CD4-positive, alpha-beta T cell (primary cell): ENCODE measurements at regions of chr4 and their contacts with region 1.

Region 1: GRCh38 chr4:36325499-36325898 is 44.1 kb downstream of the DTHD1 start:
- DNase-seq: peak in 4 of 14 experiments; percentile 17 to 78 (median 70)
- ATAC-seq: peak; percentile 29
- H3K4me3 ChIP-seq: no peak overlapping the region
- H3K4me3 Mint-ChIP-seq: peak overlapping the region; percentile 1
- H3K27ac ChIP-seq: peak overlapping the region in 1 of 2 donors; percentile 4
- H3K27ac Mint-ChIP-seq: peak overlapping the region; percentile 28
- H3K4me1 ChIP-seq: peaks cover 24% of the 10 kb centered on the region
- H3K4me1 Mint-ChIP-seq: peaks cover 47% of the 10 kb centered on the region
- H3K27me3 ChIP-seq: no peaks in the 10 kb centered on the region
- H3K27me3 Mint-ChIP-seq: no peaks in the 10 kb centered on the region
- CTCF ChIP-seq: no peak

Region 2: GRCh38 chr4:35591035-35591434 is 734.5 kb before region 1 on chr4:
- CTCF ChIA-PET with region 1: no interaction called
- POLR2A ChIA-PET with region 1: no interaction called
- intact Hi-C with region 1: no loop called
- DNase-seq: no peak
- ATAC-seq: no peak
- H3K4me3 ChIP-seq: no peak overlapping the region
- H3K4me3 Mint-ChIP-seq: no peak overlapping the region
- H3K27ac ChIP-seq: no peak overlapping the region
- H3K27ac Mint-ChIP-seq: no peak overlapping the region
- H3K4me1 ChIP-seq: no peaks in the 10 kb centered on the region
- H3K4me1 Mint-ChIP-seq: no peaks in the 10 kb centered on the region
- H3K27me3 ChIP-seq: no peaks in the 10 kb centered on the region
- H3K27me3 Mint-ChIP-seq: no peaks in the 10 kb centered on the region
- CTCF ChIP-seq: no peak

Region 3: GRCh38 chr4:36285784-36286480 is 39.6 kb before region 1 on chr4:
- CTCF ChIA-PET with region 1: no interaction called
- POLR2A ChIA-PET with region 1: interaction called, 5 read pairs
- intact Hi-C with region 1: loop called in 1 of 2 experiments (anchors 5 kb)
- DNase-seq: peak in 13 of 14 experiments; percentile 9 to 92 (median 41)
- ATAC-seq: peak; percentile 93
- H3K4me3 ChIP-seq: peak overlapping the region; percentile 15
- H3K4me3 Mint-ChIP-seq: peak overlapping the region; percentile 49
- H3K27ac ChIP-seq: peak overlapping the region; percentile 13 to 61
- H3K27ac Mint-ChIP-seq: peak overlapping the region; percentile 83
- H3K4me1 ChIP-seq: no peaks in the 10 kb centered on the region
- H3K4me1 Mint-ChIP-seq: peaks cover 20% of the 10 kb centered on the region
- H3K27me3 ChIP-seq: no peaks in the 10 kb centered on the region
- H3K27me3 Mint-ChIP-seq: no peaks in the 10 kb centered on the region
- CTCF ChIP-seq: no peak